ENCODE measurements at regions of chr17 and their contacts with region 1.

Region 1: DNA sequence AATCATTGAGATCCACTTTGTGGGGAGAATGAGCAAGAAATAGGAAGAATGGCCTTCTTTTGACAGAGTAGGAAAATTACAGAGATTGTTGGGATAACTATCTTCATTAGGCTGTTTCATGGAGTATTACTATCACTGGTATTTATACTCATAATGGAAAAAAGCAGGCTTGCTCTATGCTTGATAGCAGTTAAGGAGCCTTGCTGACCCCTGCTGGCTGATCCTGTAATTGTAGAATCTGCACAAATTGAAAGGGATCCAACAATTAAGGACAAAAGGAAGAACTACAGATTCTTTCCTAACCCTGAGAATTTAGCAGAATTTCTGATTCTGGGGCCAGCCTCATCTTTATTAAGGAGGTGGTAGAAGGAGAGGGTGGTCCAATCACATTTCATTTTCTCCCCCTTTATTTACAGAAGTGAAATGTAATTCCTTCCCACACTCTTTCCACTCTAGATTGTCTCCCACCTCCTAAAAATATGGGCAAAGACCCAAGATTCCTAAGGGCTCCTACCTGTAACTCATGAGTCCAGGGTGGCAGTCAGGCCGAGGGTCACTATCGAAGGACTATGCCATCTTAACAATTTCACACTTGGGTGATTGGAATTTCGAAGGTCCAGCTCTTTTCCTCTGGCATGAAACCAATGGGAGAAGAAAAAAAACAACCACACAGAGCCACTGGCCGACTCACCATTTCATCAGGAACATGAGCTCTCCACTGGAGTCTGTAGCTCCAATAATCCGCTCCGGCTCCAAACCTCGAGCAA is 26.3 kb downstream of the NFE2L1 start:
- H3K4me3 ChIP-seq: no peak overlapping the region
- H3K27ac ChIP-seq: peak overlapping the region; percentile 44; the same call in 1 of the 2 replicates
- H3K4me1 ChIP-seq: no peaks in the 10 kb centered on the region
- CTCF ChIP-seq: peak; percentile 23; the same call in 1 of the 2 replicates

Region 2: GRCh38 chr17:47935961-47936360 is 138.5 kb before region 1 on chr17:
- CTCF ChIA-PET with region 1: no interaction called
- POLR2A ChIA-PET with region 1: no interaction called
- H3K4me3 ChIP-seq: no peak overlapping the region
- H3K27ac ChIP-seq: no peak overlapping the region
- H3K4me1 ChIP-seq: no peaks in the 10 kb centered on the region
- CTCF ChIP-seq: no peak

Region 3: GRCh38 chr17:48054238-48055185 is 20.0 kb before region 1 on chr17:
- CTCF ChIA-PET with region 1: interaction called, 18 read pairs
- POLR2A ChIA-PET with region 1: interaction called, 5 read pairs
- H3K4me3 ChIP-seq: no peak overlapping the region
- H3K27ac ChIP-seq: peak overlapping the region; percentile 77; the same call in 1 of the 2 replicates
- H3K4me1 ChIP-seq: peaks cover 49% of the 10 kb centered on the region
- CTCF ChIP-seq: no peak

Region 4: DNA sequence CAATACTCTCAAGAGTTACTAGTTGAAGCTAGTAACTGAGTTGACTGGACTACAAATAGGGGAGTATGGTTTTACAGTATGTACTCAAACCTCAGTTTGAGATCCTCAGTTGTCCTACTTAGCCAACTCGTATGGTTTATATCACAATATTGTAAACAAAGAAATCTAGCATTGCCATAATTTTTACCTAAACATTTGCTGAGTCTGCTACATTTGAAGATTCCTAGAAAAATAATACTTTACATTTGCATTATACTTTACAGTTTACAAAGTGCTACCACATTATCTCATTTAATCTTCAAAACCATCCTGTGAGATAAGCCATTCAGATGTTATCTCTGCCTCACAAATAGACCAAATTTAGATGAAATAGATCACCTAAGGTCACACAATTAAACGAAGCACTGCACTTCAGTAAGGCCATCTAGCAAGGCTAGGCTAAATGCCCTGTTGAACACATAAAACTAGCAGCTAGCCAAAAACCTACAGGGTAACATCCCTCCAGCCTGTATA is 10.5 kb after region 1 on chr17:
- CTCF ChIA-PET with region 1: interaction called, 17 read pairs
- POLR2A ChIA-PET with region 1: no interaction called
- H3K4me3 ChIP-seq: no peak overlapping the region
- H3K27ac ChIP-seq: no peak overlapping the region
- H3K4me1 ChIP-seq: peaks cover 18% of the 10 kb centered on the region
- CTCF ChIP-seq: no peak

Region 5: GRCh38 chr17:48093341-48094045 is 19.0 kb after region 1 on chr17:
- CTCF ChIA-PET with region 1: interaction called, 31 read pairs
- POLR2A ChIA-PET with region 1: no interaction called
- H3K4me3 ChIP-seq: no peak overlapping the region
- H3K27ac ChIP-seq: no peak overlapping the region
- H3K4me1 ChIP-seq: peaks cover 8% of the 10 kb centered on the region
- CTCF ChIP-seq: no peak

Region 6: DNA sequence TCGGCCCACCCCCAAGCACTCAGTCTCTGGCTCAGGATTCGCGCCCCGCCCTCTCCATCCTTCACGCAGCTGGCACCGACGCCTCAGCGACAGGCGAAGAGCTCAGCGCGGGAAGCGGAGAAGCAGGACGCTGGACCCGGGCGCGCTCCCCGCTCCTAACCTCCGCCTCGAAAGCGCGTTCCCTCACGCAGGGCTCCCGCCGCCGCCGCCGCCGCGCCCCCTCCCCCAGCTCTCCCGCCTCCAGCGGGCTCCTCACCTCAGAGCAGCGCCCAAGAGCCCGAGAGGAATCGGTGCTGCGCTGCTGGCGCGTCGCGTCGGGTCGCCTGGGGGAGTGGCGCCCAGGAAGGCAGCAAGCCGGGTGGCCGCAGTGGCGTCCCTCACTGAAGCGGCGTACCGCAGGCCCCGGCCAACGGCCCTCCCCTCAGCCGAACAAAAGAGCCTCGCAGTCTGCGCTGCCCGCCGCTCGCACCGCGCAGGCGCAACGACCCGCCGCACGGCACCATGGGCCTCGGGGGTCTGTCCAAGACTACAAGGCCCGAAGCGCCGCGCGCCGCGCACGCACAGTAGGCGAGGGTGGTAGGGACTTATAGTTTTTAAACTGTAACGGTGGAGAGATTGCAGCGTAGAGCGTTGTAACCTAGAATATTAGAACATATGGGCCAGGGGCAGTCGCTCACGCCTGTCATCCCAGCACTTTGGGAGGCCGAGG is 26.7 kb after region 1 on chr17 and contains the start of gene CBX1:
- CTCF ChIA-PET with region 1: interaction called, 31 read pairs
- POLR2A ChIA-PET with region 1: interaction called, 11 read pairs
- H3K4me3 ChIP-seq: peak within 1 kb of the TSS; percentile 85
- H3K27ac ChIP-seq: peak within 1 kb of the TSS; percentile 97
- H3K4me1 ChIP-seq: peaks cover 4% of the 10 kb centered on the region; the same call in 1 of the 2 replicates
- CTCF ChIP-seq: no peak

Region 7: GRCh38 chr17:48107168-48108132 is 33.0 kb after region 1 on chr17 and contains the start of gene SNX11:
- CTCF ChIA-PET with region 1: interaction called, 15 read pairs
- POLR2A ChIA-PET with region 1: interaction called, 4 read pairs
- H3K4me3 ChIP-seq: peak within 1 kb of the TSS; percentile 81
- H3K27ac ChIP-seq: peak within 1 kb of the TSS; percentile 87
- H3K4me1 ChIP-seq: peaks cover 8% of the 10 kb centered on the region
- CTCF ChIP-seq: peak; percentile 76; the same call in 1 of the 2 replicates

Region 8: DNA sequence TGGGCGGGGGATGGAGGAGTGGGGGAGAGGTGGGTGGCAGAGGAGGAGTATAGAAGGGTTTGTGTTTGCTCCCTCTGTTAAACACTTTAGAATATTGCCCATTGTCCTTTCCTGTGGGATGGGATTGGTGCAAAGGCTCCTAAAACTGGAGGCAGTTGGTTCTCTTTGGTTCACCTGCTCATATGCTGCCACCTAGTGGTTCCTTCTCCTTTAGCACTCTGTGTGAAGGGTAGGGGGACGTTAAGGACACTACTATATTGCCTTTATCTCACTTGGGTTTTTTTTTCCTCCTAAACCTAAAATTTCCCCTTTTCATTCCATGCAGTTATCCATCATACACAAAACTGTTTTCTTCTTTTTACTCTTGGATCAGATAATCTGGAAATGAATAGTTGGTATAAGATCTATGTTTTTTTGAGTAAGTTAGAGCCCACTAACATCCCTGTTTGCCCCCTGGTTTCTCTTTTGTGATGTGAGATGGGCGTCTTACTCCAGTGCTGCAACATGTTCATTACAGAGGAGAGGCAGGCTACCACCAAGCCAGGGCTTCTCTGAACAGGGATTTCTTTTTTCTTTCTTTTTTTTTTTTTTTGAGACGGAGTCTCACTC is 56.8 kb after region 1 on chr17:
- CTCF ChIA-PET with region 1: interaction called, 24 read pairs
- POLR2A ChIA-PET with region 1: no interaction called
- H3K4me3 ChIP-seq: no peak overlapping the region
- H3K27ac ChIP-seq: no peak overlapping the region
- H3K4me1 ChIP-seq: no peaks in the 10 kb centered on the region
- CTCF ChIP-seq: peak; percentile 68; the same call in 1 of the 2 replicates